Activated B cell treated with CpG ODN at 0.5 μM for 24 hours (primary cell): ENCODE measurements at regions of chr14 and their contacts with region 1.

Region 1: DNA sequence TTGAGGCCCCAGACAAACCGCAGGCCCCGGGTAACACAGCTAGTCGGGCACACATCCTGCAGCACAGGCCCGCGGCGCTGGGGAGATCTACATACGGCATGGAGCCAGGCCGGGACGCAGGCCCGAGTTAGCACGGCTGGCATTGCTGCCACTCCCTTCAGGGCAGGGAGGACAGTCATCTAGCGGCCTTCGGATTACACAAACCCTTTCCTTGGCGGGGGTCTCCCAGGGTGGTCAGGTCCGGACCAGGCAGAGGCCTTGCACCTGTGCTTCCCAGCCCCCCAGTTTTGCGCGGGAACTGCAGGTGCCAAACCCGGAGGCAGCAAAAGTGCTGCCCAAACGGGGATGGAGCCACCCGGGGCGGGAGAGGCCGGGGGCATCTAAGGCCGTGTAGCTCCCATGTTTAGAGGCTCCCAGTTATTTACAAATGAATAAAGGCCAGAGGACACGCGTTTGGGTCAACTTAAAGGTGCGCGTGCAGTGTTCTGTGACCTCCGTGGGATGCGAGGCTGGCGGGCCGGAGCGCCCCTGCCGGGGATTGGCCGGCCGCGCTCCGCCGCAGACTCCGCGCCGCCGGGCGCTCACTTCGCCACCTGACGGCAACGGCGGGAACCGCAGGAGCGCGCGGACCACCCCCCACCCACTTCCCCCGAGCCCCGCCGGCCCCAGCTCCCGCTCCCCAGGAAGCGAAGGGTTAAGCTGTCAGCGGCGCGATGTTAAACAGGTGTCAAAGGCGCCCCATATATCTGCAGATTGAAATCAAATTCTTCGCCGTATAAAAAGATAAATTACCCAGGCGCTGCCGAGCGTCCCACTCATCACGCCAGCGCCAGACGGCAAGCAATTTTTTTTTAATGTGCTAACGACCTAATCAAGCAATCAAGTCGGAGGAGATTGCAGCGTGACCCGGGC is 18.1 kb downstream of the VSX2 start:
- DNase-seq: peak; percentile 63
- ATAC-seq: peak; percentile 97
- H3K4me3 Mint-ChIP-seq: peak overlapping the region; percentile 81
- H3K27ac Mint-ChIP-seq: no peak overlapping the region
- H3K4me1 Mint-ChIP-seq: peaks cover 12% of the 10 kb centered on the region
- H3K27me3 Mint-ChIP-seq: peaks cover 11% of the 10 kb centered on the region
- CTCF ChIP-seq: peak; percentile 70

Region 2: DNA sequence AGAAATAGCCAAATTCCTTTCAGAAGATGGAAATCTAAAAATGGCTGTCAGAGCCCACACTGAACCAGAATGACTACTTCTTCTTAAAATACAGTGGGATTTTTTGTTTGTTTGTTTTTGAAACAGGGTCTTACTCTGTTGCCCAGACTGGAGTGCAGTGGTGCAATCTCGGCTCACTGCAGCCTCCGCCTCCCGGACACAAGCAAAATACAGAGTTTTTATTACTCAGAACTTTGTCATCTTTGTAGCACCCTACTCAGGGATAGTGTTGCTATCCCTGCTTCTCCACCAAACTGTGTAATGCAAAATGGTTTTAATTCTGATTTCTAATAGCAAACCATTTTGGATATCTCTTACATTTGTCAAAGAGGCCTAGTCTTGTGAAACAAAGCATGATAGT is 354.3 kb before region 1 on chr14:
- CTCF ChIA-PET with region 1: no interaction called
- POLR2A ChIA-PET with region 1: no interaction called
- intact Hi-C with region 1: no loop called
- DNase-seq: no peak
- ATAC-seq: no peak
- H3K4me3 Mint-ChIP-seq: no peak overlapping the region
- H3K27ac Mint-ChIP-seq: no peak overlapping the region
- H3K4me1 Mint-ChIP-seq: no peaks in the 10 kb centered on the region
- H3K27me3 Mint-ChIP-seq: no peaks in the 10 kb centered on the region
- CTCF ChIP-seq: no peak

Region 3: GRCh38 chr14:74109369-74109768 is 148.0 kb before region 1 on chr14:
- CTCF ChIA-PET with region 1: interaction called, 10 read pairs
- POLR2A ChIA-PET with region 1: interaction called, 3 read pairs
- intact Hi-C with region 1: loop called (anchors 1 kb)
- DNase-seq: no peak
- ATAC-seq: no peak
- H3K4me3 Mint-ChIP-seq: no peak overlapping the region
- H3K27ac Mint-ChIP-seq: no peak overlapping the region
- H3K4me1 Mint-ChIP-seq: no peaks in the 10 kb centered on the region
- H3K27me3 Mint-ChIP-seq: no peaks in the 10 kb centered on the region
- CTCF ChIP-seq: no peak

Region 4: DNA sequence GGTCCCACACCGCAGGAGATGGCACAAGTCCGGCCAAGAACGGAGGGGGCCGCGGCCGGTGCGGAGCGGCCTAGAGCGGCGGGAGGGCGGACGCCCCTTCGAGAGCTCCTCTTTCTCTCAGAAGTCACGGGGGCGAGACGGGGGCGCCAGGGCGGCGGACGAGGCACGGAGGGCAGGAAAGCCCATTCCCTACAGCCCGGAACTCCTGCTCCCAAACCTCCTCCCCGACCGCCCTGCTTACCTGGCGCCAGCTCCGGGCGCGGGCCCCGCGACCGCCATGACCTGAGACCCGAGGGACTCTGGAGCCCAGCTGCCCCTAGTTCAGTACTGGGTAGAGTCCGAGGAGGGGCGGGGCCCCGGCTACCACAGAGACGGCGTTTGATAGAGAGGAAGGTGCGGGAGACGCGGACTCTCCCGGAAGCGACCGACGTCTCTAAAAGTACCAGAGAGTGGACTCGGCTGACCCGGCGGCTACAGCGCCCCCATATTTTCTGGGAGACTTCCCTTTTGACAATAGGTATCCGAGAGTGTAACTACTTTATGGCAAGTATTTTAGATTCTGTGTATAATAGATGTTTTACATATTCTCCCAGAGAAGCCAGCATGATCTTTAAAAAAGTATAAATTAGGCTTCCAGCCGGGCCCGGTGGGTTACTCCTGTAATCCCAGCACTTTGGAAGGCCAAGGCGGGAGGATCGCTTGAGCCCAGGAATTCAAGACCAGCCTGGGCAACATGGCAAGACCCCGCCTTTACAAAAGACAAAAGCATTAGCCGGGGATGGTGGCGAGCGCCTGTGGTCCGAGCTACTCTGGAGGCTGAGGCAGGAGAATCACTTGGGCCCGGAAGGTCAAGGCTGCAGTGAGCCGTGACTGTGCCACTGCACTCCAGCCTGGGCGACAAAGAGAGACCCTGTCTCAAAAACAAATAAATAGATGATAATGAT is 45.6 kb after region 1 on chr14 and contains the start of gene ABCD4:
- CTCF ChIA-PET with region 1: no interaction called
- POLR2A ChIA-PET with region 1: no interaction called
- intact Hi-C with region 1: loop called (anchors 2 kb)
- DNase-seq: peak; percentile 84
- ATAC-seq: peak; percentile 97
- H3K4me3 Mint-ChIP-seq: peak within 1 kb of the TSS; percentile 96
- H3K27ac Mint-ChIP-seq: peak within 1 kb of the TSS; percentile 94
- H3K4me1 Mint-ChIP-seq: peaks cover 26% of the 10 kb centered on the region
- H3K27me3 Mint-ChIP-seq: no peaks in the 10 kb centered on the region
- CTCF ChIP-seq: no peak
- total RNA-seq, gene ABCD4: 58.2 and 78.4 TPM in 2 replicates